ENCODE measurements at regions of chr1 and their contacts with region 1.

Region 1: GRCh38 chr1:205631727-205632373 is at the start of gene ELK4:
- DNase-seq: peak; percentile 100
- H3K4me3 Mint-ChIP-seq: peak within 1 kb of the TSS; percentile 81
- H3K27ac Mint-ChIP-seq: peak within 1 kb of the TSS; percentile 92
- H3K4me1 Mint-ChIP-seq: peaks cover 37% of the 10 kb centered on the region
- H3K27me3 Mint-ChIP-seq: no peaks in the 10 kb centered on the region
- total RNA-seq, gene ELK4: 60.5 to 62.4 TPM

Region 2: DNA sequence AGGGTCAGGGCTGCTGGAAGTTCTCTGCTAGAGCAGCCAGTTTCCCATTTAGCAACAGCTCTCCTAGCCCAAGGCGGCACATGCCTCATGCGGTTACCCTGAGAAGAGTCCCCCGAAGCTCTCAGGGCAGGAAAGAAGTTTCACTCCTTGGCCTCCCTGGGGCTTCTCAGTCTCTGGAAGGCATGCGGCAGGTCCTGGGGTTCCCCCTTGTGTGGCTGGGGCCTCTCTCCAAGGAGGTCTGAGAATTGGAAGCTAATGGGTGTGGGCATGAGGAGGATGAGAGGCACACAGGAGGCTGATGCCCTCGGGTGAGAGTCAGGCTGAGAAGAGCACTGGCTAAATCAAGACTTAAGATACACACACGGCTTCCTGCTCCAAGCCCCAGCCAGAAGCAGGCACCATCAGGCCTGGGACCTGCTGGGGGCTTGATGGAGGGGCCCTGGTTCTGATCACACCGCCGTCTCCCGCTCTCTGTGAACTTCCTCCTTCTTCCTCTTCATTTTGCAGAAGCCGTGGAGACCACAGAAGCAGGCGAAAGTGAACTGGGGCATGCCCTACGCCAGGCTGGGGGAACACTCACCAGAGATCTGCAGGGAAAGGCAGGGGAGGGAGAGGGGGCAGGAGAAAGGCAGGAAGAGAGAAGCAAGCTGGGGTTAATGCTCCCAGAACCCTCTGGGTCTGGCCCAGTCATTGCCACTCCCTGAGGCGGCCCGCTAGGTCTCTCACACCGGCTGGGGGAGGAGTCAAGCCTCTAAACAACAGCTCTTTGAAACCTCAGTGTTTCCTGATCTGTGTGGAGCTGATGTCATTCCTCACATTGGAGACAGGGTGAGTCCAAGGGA is 191.2 kb before region 1 on chr1:
- CTCF ChIA-PET with region 1: no interaction called
- intact Hi-C with region 1: loop called (anchors 2 kb)
- DNase-seq: peak; percentile 93
- H3K4me3 Mint-ChIP-seq: peak overlapping the region; percentile 72
- H3K27ac Mint-ChIP-seq: peak overlapping the region; percentile 77
- H3K4me1 Mint-ChIP-seq: peaks cover 15% of the 10 kb centered on the region
- H3K27me3 Mint-ChIP-seq: no peaks in the 10 kb centered on the region

Region 3: GRCh38 chr1:205591522-205592351 is 40.1 kb before region 1 on chr1:
- CTCF ChIA-PET with region 1: interaction called, 262 read pairs
- intact Hi-C with region 1: loop called (anchors 1 kb)
- DNase-seq: peak; percentile 96
- H3K4me3 Mint-ChIP-seq: peak overlapping the region; percentile 88
- H3K27ac Mint-ChIP-seq: peak overlapping the region; percentile 90
- H3K4me1 Mint-ChIP-seq: peaks cover 48% of the 10 kb centered on the region
- H3K27me3 Mint-ChIP-seq: no peaks in the 10 kb centered on the region

Region 4: GRCh38 chr1:205700865-205701401 is 69.1 kb after region 1 on chr1:
- CTCF ChIA-PET with region 1: no interaction called
- intact Hi-C with region 1: no loop called
- DNase-seq: no peak
- H3K4me3 Mint-ChIP-seq: no peak overlapping the region
- H3K27ac Mint-ChIP-seq: no peak overlapping the region
- H3K4me1 Mint-ChIP-seq: peaks cover 4% of the 10 kb centered on the region
- H3K27me3 Mint-ChIP-seq: peaks cover 6% of the 10 kb centered on the region

Region 5: DNA sequence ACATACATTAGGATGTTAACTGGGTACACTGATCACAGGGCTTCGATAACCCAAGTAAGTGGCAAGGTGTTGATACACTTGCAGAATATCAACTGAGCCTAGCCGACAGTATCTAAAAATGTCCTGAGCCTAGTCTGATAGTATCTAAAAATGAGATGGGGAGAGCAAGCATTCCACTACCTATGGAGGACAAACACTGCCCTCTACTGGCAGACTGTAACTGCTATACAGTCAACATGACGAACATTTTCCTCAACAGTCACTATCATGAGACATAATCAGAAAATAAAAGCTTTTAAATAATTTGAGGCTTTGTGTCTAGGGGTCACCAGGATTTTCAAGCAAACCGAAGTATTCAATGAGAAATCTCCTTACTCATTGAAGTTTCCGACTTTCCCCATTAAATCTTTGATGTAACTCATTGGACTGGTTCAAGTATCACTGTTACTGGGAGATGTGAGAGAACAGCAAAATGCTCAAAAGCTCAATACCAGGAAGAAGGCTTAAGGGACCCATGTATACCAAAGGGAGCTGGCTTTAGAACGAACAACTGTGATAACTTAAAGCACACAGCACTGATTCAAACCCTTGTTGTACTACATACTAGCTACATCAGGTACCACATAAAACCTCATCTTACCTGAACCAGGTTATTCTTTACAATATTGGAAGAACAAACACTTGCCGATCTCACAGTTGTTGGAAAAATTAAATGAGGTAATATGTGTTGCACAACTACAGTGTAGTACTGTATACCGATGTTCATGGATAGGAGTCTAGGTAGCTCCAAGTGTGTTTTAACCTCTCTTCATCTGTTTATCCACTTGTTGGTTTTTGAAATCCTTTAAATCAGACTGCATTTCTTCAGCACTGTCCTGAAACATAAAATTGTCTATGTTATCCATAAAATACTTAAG is 79.5 kb after region 1 on chr1:
- CTCF ChIA-PET with region 1: interaction called, 11 read pairs
- intact Hi-C with region 1: no loop called
- DNase-seq: peak; percentile 85
- H3K4me3 Mint-ChIP-seq: no peak overlapping the region
- H3K27ac Mint-ChIP-seq: peak overlapping the region; percentile 56
- H3K4me1 Mint-ChIP-seq: peaks cover 22% of the 10 kb centered on the region
- H3K27me3 Mint-ChIP-seq: no peaks in the 10 kb centered on the region

Region 6: DNA sequence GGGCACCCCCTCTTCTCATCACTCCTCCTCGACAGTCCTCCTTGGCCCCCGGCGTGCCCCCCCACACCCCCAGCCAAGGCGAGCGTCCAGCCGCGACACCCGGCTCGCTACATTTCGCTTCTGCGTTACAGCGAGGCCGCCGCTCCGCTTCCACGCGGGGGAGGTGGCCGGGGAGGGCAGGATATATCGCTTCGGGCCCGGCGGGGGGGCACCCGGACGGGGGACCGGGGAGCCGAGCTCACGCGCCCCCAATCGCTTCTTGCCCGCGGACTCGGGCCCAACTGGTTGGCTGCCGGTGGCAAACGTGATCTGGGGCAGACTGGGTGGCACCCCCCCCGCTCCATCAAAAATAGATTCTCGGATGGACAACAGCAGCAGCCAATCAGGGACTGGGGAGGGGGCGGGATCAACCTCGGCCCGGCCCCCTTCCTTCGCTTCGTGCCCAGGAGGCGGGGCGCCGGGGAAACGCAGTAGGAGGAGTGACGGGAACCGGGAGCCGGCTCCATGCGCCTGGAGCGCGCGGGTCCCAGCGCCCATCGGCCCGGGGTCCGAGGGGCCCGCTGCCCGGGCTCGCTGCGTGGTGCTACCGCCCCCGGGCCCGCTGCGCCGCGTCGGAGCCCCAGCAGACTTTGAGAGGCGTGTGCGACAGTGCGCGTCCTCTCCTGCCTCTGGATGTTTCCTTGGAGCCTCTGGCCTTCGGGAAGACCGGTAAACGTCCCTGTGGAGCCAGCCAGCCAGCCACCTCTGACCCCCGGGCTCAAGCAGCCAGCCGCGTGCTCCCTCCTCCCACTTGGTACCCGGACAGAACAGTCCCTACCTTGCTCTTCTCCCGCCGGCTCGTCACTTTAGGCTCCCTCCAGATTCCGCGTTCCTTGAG is 181.3 kb after region 1 on chr1 and contains the start of gene SLC41A1:
- CTCF ChIA-PET with region 1: no interaction called
- intact Hi-C with region 1: loop called (anchors 1 kb)
- DNase-seq: peak; percentile 95
- H3K4me3 Mint-ChIP-seq: peak within 1 kb of the TSS; percentile 89
- H3K27ac Mint-ChIP-seq: peak within 1 kb of the TSS; percentile 74
- H3K4me1 Mint-ChIP-seq: peaks cover 49% of the 10 kb centered on the region
- H3K27me3 Mint-ChIP-seq: no peaks in the 10 kb centered on the region
- total RNA-seq, gene SLC41A1: 32.1 to 33.9 TPM

Measured in activated naive CD4-positive, alpha-beta T cell treated with anti-CD3 and anti-CD28 coated beads for 36 hours (primary cell).